ENCODE measurements at regions of chr16 and their contacts with region 1.

Region 1: DNA sequence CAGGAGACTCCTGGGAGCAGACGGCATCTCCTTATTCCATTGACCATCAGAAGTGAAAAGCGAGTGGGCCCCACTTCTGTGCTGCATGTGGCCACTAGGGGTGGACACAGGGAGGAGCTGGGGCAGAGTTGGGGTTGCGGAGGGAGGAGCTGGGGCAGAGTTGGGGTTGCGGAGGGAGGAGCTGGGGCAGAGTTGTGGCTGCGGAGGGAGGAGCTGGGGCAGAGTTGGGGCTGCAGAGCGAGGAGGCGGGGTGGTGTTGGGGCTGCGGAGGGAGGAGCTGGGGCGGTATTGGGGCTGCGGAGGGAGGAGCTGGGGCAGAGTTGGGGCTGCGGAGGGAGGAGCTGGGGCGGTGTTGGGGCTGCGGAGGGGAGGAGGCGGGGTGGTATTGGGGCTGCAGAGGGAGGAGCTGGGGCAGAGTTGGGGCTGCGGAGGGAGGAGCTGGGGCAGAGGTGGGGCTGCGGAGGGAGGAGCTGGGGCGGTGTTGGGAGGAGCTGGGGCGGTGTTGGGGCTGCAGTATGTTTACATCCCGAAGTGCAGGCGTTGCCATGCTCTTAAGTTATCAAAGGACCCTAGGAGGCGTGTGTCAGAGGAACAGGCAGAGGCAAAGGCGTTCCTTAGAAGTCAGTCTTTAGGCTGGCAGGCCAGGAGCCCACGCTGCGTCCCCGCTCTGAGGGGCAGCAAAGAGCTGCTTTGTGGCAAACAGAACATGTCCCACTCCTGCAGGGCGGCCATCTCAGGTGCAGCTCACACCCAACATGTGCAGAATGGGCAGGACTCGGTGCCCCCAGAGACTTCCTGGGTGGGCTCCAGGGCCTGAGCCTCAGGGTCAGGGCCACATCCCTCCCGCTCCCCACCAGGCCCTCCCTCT is 76.0 kb downstream of the ZNF778 start:
- DNase-seq: peak; percentile 70
- ATAC-seq: peak; percentile 36
- H3K4me3 Mint-ChIP-seq: no peak overlapping the region
- H3K27ac Mint-ChIP-seq: peak overlapping the region; percentile 96
- H3K4me1 Mint-ChIP-seq: peaks cover 80% of the 10 kb centered on the region
- H3K27me3 Mint-ChIP-seq: no peaks in the 10 kb centered on the region
- CTCF ChIP-seq: no peak

Region 2: GRCh38 chr16:89241187-89242007 is 52.1 kb before region 1 on chr16:
- CTCF ChIA-PET with region 1: interaction called, 13 read pairs
- POLR2A ChIA-PET with region 1: no interaction called
- DNase-seq: peak; percentile 70
- ATAC-seq: peak; percentile 81
- H3K4me3 Mint-ChIP-seq: peak overlapping the region; percentile 98
- H3K27ac Mint-ChIP-seq: peak overlapping the region; percentile 98
- H3K4me1 Mint-ChIP-seq: peaks cover 2% of the 10 kb centered on the region; the same call in 1 of the 2 replicates
- H3K27me3 Mint-ChIP-seq: peaks cover 13% of the 10 kb centered on the region
- CTCF ChIP-seq: no peak

Region 3: DNA sequence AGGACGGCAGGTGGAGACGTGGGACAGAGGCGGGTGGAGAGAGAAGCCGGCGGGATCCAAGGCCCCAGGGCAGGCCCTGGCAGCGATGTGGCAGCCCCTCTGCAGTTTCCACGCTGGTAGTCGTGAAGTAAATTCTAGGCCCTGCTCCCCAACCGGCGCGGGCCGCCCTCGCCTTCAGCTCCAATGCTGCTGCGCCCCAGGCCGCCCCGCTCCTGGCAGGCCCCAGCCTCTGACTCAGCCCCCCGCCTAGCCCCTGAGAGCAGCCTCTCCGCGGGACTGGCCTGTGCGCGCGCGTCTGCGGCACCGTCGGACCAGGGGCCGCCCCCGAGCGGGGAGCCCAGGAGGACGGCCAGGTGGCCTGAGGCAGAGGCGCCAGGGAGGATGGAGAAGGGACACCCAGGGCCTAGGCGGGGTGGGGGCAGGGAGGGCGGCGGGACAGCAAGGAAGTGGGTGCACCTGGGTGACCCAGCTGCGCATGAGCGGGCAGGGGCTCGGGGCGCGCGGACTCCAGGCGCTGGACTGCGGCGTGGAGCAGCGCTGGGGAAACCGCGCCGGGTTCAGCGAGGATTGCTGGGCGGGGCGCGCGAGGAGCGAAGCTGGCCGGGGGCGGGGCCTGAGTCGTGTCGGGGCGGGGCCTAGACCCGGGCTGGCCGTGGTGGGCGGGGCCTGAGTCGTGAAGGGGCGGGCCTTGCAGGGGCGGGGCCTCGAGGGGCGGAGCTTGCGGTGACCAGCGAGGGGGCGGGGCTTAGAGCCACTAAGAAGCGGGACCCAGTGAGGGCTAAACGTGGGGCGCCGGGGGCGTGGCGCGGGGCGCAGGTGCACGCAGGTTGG is 46.4 kb before region 1 on chr16:
- CTCF ChIA-PET with region 1: interaction called, 17 read pairs
- POLR2A ChIA-PET with region 1: interaction called, 5 read pairs
- DNase-seq: peak; percentile 92
- ATAC-seq: peak; percentile 90
- H3K4me3 Mint-ChIP-seq: peak overlapping the region; percentile 66
- H3K27ac Mint-ChIP-seq: no peak overlapping the region
- H3K4me1 Mint-ChIP-seq: no peaks in the 10 kb centered on the region
- H3K27me3 Mint-ChIP-seq: peaks cover 39% of the 10 kb centered on the region
- CTCF ChIP-seq: no peak

Region 4: DNA sequence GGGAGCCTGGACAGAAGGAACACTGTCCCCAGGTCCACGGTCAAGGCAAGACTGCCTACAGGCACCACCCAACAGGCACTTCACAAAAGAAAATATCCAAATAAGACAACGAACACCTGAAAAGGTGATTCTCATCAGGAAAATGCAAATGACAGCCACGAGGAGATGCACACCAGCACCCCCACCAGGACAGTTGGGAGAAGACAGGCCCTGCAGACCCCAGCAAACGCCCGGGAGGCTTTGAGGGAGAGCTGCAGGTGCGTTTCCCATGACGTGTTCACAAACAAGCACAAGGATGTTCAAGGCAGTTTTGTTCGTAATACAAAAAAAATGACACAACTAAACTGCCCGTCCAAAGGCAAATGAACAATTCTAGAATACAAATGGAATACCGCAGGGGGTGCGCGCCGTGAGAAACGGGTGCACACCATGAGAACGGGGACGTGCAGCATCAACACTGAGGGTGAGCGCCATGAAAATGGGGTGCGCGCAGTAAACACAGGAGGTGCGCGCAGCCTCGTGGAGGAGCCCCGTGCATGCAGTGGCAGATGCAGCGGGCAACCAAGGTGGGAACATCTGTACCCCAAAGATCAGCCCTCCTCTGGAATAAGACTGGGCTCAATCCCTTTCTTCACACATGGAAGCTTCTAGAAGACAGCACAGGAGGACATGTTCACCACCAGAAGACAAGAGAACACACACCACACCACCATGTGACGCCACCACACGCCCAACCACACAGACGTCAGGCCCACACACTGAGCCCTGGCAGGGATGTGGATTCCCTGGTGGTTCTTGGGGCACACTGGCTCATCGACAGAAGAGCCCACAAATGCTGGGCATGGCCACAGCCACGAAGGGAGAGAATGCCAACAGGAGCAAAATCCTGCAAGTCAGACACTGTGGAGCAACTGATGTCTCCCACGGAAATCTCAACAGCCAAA is 15.2 kb after region 1 on chr16:
- CTCF ChIA-PET with region 1: interaction called, 89 read pairs
- POLR2A ChIA-PET with region 1: interaction called, 3 read pairs
- DNase-seq: peak; percentile 73
- ATAC-seq: peak; percentile 81
- H3K4me3 Mint-ChIP-seq: no peak overlapping the region
- H3K27ac Mint-ChIP-seq: peak overlapping the region; percentile 64
- H3K4me1 Mint-ChIP-seq: peaks cover 13% of the 10 kb centered on the region
- H3K27me3 Mint-ChIP-seq: no peaks in the 10 kb centered on the region
- CTCF ChIP-seq: peak; percentile 74

Region 5: DNA sequence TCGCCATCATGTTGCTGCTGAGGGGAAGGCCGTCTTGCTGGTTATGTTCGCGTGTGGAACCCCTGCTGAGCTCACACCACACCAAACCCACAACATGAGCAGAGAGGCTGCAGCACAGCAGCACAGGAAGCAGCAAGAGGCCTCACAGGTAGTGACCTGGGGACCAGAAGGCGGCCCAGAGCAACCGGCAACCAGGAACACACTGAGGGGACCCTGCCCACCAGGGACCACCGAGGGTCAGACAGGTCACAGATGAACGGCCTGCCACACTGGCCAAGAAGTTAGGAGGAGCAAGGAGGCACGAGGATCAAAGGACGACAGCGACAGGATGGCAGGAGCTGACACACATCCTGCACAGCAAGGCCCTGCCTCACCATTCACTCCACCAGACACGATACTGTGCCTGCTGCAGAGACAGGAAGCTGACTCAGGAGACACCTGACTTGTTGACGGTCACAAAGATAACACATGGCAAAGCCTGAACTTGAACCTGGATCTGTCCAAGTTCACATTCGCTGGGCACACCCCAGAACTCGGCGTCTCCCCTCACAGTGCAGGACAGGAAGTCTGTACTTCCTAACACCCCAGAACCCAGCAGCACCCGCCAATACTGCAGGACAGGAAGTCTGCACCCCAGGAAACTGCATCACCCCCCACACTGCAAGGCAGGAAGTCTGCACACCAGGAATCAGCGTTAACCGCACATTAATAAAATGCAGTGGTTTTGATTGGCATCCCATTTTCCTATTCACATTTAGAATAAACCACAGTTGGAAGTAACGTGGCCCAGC is 22.5 kb after region 1 on chr16:
- CTCF ChIA-PET with region 1: interaction called, 16 read pairs
- POLR2A ChIA-PET with region 1: interaction called, 3 read pairs
- DNase-seq: no peak
- ATAC-seq: no peak
- H3K4me3 Mint-ChIP-seq: no peak overlapping the region
- H3K27ac Mint-ChIP-seq: peak overlapping the region; percentile 76
- H3K4me1 Mint-ChIP-seq: peaks cover 62% of the 10 kb centered on the region
- H3K27me3 Mint-ChIP-seq: no peaks in the 10 kb centered on the region
- CTCF ChIP-seq: no peak

Region 6: GRCh38 chr16:89322321-89323119 is 29.0 kb after region 1 on chr16:
- CTCF ChIA-PET with region 1: interaction called, 19 read pairs
- POLR2A ChIA-PET with region 1: no interaction called
- DNase-seq: peak; percentile 60
- ATAC-seq: peak; percentile 66
- H3K4me3 Mint-ChIP-seq: peak overlapping the region; percentile 42
- H3K27ac Mint-ChIP-seq: peak overlapping the region; percentile 97
- H3K4me1 Mint-ChIP-seq: peaks cover 90% of the 10 kb centered on the region
- H3K27me3 Mint-ChIP-seq: no peaks in the 10 kb centered on the region
- CTCF ChIP-seq: no peak